HepG2 (cell line): ENCODE measurements at regions of chr6 and their contacts with region 1.

Region 1: GRCh38 chr6:127641905-127642304 is 64.9 kb downstream of the C6orf58 start:
- DNase-seq: peak; percentile 26
- ATAC-seq: peak; percentile 94
- H3K4me3 ChIP-seq: no peak overlapping the region
- H3K27ac ChIP-seq: no peak overlapping the region
- H3K4me1 ChIP-seq: no peaks in the 10 kb centered on the region
- H3K27me3 ChIP-seq: no peaks in the 10 kb centered on the region
- CTCF ChIP-seq: peak; percentile 81
- EP300 ChIP-seq: no peak
- POLR2A ChIP-seq: no peak
- RAD21 ChIP-seq: 0 out of 2 replicates have a peak, but pooled peaks have one; percentile 21

Region 2: GRCh38 chr6:127554435-127555006 is 87.4 kb before region 1 on chr6:
- CTCF ChIA-PET with region 1: interaction called, 16 read pairs
- POLR2A ChIA-PET with region 1: no interaction called
- in situ Hi-C with region 1: loop called (anchors 5 kb)
- intact Hi-C with region 1: loop called (anchors 1 kb)
- DNase-seq: peak; percentile 46
- ATAC-seq: peak; percentile 96
- H3K4me3 ChIP-seq: no peak overlapping the region
- H3K27ac ChIP-seq: no peak overlapping the region
- H3K4me1 ChIP-seq: no peaks in the 10 kb centered on the region
- H3K27me3 ChIP-seq: no peaks in the 10 kb centered on the region
- CTCF ChIP-seq: peak; percentile 73
- EP300 ChIP-seq: no peak
- POLR2A ChIP-seq: no peak
- RAD21 ChIP-seq: peak; percentile 36; the same call in 1 of the 2 replicates

Region 3: DNA sequence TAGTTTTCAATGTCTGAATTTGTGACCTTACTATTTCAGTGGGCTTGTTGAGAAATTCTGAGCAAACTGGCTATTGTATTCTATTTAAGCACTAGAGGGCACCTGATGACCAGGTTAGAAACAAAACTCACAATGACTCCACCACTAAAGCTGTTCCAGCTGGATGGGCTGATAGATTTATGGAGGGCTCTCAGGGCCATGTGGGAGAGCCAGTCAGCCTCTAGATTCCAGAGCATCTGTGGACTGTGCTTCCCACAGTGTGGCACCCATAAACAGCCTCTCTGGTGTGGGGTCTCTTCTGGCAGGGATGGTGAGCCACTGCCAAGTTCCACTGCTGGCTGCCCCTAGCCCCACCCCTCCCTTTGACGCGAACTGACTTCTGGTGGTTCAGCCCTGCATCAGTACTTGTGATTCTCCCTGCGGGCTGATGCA is 35.8 kb before region 1 on chr6:
- CTCF ChIA-PET with region 1: interaction called, 10 read pairs
- POLR2A ChIA-PET with region 1: no interaction called
- in situ Hi-C with region 1: no loop called
- intact Hi-C with region 1: loop called (anchors 1 kb)
- DNase-seq: peak; percentile 44
- ATAC-seq: peak; percentile 93
- H3K4me3 ChIP-seq: no peak overlapping the region
- H3K27ac ChIP-seq: no peak overlapping the region
- H3K4me1 ChIP-seq: no peaks in the 10 kb centered on the region
- H3K27me3 ChIP-seq: no peaks in the 10 kb centered on the region
- CTCF ChIP-seq: peak; percentile 65
- EP300 ChIP-seq: no peak
- POLR2A ChIP-seq: no peak
- RAD21 ChIP-seq: peak; percentile 39; the same call in 1 of the 2 replicates